ENCODE measurements at regions of chr4 and their contacts with region 1.

Region 1: DNA sequence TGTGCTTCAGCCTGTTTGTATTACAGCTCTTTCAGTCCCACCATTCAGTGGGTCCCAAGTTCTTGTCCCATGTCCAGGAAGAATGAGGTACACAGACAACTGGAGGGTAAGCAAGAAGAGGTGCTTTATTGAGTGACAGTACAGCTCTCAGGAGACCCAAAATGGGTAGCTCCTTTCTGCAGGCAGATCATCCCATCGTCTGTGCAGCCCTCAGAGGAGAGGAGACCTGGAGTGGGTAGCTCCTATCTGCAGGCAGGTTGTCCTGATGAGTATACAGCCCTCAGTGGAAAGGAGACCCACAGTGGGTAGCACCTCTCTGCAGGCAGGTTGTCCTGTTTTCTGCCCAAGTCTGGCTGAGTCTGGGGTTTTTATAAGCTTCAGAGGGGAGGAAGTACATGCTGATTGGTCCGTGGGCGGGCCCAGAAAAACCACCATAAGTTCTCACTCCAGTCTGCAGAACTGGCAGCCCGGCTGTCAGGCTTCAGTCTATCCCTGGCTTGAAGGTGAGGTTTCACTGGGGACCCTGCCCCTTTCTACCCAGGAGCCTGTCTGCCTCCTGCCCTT is 18.0 kb downstream of the GRK4 start:
- DNase-seq: no peak
- ATAC-seq: no peak
- H3K4me3 ChIP-seq: no peak overlapping the region
- H3K27ac ChIP-seq: no peak overlapping the region
- H3K4me1 ChIP-seq: no peaks in the 10 kb centered on the region
- H3K27me3 ChIP-seq: no peaks in the 10 kb centered on the region
- CTCF ChIP-seq: no peak

Region 2: DNA sequence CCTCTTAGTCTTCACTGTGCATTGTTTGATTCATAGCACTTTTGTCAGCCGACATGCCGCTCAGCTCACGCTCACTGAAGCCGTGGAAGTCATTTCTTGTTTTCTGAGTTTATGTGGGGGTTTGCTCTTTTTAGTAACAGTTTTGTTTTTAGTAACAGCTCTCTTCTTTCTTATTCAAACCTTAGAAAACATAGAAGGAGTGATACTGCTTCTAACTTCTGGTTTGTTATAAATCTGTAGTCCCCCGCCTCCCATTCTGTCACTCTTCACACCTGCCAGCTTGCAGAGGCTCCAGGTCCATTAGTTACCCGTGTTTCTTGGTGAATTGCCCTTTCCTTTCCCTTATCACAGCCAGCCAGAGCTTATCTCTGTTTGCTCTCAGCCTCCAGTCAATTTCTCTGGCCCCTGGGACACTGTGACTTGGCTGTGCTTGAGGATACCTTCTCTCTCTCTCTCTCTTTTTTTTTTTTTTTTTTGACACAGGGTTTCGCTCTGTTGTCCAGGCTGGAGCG is 32.6 kb after region 1 on chr4:
- intact Hi-C with region 1: no loop called
- DNase-seq: no peak
- ATAC-seq: no peak
- H3K4me3 ChIP-seq: no peak overlapping the region
- H3K27ac ChIP-seq: no peak overlapping the region
- H3K4me1 ChIP-seq: no peaks in the 10 kb centered on the region
- H3K27me3 ChIP-seq: no peaks in the 10 kb centered on the region
- CTCF ChIP-seq: no peak

Region 3: GRCh38 chr4:3031357-3032082 is 50.2 kb after region 1 on chr4:
- intact Hi-C with region 1: loop called in 1 of 2 experiments (anchors 5 kb)
- DNase-seq: no peak
- ATAC-seq: peak in 1 of 4 donors; percentile 49
- H3K4me3 ChIP-seq: no peak overlapping the region
- H3K27ac ChIP-seq: no peak overlapping the region
- H3K4me1 ChIP-seq: no peaks in the 10 kb centered on the region
- H3K27me3 ChIP-seq: no peaks in the 10 kb centered on the region
- CTCF ChIP-seq: no peak

Region 4: GRCh38 chr4:3047464-3048286 is 66.3 kb after region 1 on chr4:
- intact Hi-C with region 1: no loop called
- DNase-seq: peak; percentile 74 to 86
- ATAC-seq: peak; percentile 92 to 96 (median 93)
- H3K4me3 ChIP-seq: peak overlapping the region; percentile 61
- H3K27ac ChIP-seq: peak overlapping the region; percentile 71
- H3K4me1 ChIP-seq: peaks cover 3% of the 10 kb centered on the region
- H3K27me3 ChIP-seq: no peaks in the 10 kb centered on the region
- CTCF ChIP-seq: peak; percentile 81

Region 5: GRCh38 chr4:3122081-3122563 is 140.8 kb after region 1 on chr4:
- intact Hi-C with region 1: no loop called
- DNase-seq: no peak
- ATAC-seq: peak; percentile 57 to 78 (median 70)
- H3K4me3 ChIP-seq: no peak overlapping the region
- H3K27ac ChIP-seq: peak overlapping the region; percentile 69
- H3K4me1 ChIP-seq: peaks cover 23% of the 10 kb centered on the region
- H3K27me3 ChIP-seq: no peaks in the 10 kb centered on the region
- CTCF ChIP-seq: no peak

Measured in psoas muscle (tissue), 8 donors.